B cell (primary cell): ENCODE measurements at regions of chr3 and their contacts with region 1.

Region 1: DNA sequence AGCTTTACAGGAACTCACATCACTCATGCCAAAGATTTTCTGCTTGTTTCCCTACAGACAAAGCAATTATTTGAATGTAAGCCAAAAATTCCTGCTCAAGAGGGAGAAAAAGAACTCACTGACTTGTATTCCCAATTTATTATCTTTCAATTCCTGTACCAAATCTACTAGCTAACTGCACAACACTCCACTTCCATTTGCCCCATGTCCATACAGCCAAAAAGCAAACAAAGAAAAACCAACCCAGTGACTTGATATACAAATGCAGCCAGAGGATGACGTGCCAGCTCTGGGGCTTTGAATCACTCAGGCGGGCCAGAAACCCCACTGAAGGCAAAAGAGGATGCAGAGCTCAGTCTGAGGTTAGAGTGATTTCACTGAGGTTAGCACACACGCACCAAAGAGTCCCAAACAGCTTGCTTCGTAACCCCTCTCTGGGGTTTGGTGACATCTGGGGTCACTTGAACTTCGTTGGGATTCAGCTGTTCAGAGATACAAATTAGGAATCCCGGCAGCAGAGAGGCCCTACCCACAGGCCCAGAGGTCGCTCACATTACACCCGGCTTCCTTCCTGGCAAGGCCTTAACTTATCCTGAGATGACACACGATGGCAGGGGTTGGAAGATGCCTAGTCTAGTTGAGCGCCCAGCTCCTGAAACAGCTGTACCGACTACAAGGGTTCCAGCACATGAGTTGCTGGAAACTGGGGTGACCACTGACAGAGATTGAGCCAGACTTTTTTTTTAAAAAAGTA is 1.6 kb downstream of the RFTN1 start:
- DNase-seq: peak; percentile 95
- ATAC-seq: peak; percentile 66
- H3K4me3 ChIP-seq: peak overlapping the region in 4 of 5 experiments; percentile 82 to 98 (median 91)
- H3K4me3 Mint-ChIP-seq: peak overlapping the region; percentile 74
- H3K27ac ChIP-seq: peak overlapping the region; percentile 89 to 97
- H3K27ac Mint-ChIP-seq: peak overlapping the region; percentile 71
- H3K4me1 ChIP-seq: peaks cover 80 to 87% of the 10 kb centered on the region in 2 donors
- H3K4me1 Mint-ChIP-seq: peaks cover 82% of the 10 kb centered on the region
- H3K27me3 ChIP-seq: no peaks in the 10 kb centered on the region
- H3K27me3 Mint-ChIP-seq: no peaks in the 10 kb centered on the region
- CTCF ChIP-seq: no peak

Region 2: DNA sequence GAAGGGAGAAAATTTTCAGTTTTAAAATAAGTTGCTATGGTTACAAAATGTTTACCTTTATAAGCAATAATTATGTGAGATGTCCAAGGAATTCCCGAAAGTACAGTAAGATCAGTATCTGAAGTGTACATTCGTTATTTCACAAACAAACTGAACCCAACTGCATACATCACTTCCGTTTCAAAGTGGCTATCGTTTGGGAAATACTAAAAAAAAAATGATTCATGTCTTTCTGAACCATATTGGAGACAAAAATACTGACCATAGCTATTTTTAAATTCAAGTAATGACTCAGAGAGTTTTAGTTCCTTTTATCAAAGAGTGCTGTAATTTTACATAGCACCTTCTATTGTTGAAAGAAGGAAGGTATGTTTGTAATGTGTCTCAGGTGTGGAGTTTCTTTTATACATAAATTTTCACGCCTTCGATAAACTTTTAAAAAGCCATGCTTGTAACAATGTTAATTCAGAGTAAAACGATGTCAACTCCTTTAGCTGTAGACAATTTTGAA is 706.0 kb before region 1 on chr3:
- CTCF ChIA-PET with region 1: no interaction called
- POLR2A ChIA-PET with region 1: no interaction called
- intact Hi-C with region 1: no loop called
- DNase-seq: peak; percentile 61
- ATAC-seq: peak; percentile 71
- H3K4me3 ChIP-seq: no peak overlapping the region
- H3K4me3 Mint-ChIP-seq: no peak overlapping the region
- H3K27ac ChIP-seq: peak overlapping the region; percentile 27 to 37
- H3K27ac Mint-ChIP-seq: peak overlapping the region; percentile 43
- H3K4me1 ChIP-seq: peaks cover 7 to 16% of the 10 kb centered on the region in 2 donors
- H3K4me1 Mint-ChIP-seq: peaks cover 46% of the 10 kb centered on the region
- H3K27me3 ChIP-seq: no peaks in the 10 kb centered on the region
- H3K27me3 Mint-ChIP-seq: no peaks in the 10 kb centered on the region
- CTCF ChIP-seq: no peak

Region 3: GRCh38 chr3:16264708-16265454 is 247.0 kb before region 1 on chr3 and contains the starts of genes DPH3 and OXNAD1:
- CTCF ChIA-PET with region 1: no interaction called
- POLR2A ChIA-PET with region 1: interaction called, 6 read pairs
- intact Hi-C with region 1: loop called (anchors 2 kb)
- DNase-seq: peak; percentile 99
- ATAC-seq: peak; percentile 96
- H3K4me3 ChIP-seq: peak within 1 kb of the TSS; percentile 80 to 97 (median 90)
- H3K4me3 Mint-ChIP-seq: peak within 1 kb of the TSS; percentile 99
- H3K27ac ChIP-seq: peak within 1 kb of the TSS; percentile 85 to 97
- H3K27ac Mint-ChIP-seq: peak within 1 kb of the TSS; percentile 99
- H3K4me1 ChIP-seq: peaks cover 12 to 13% of the 10 kb centered on the region in 2 donors
- H3K4me1 Mint-ChIP-seq: peaks cover 25% of the 10 kb centered on the region
- H3K27me3 ChIP-seq: no peaks in the 10 kb centered on the region
- H3K27me3 Mint-ChIP-seq: no peaks in the 10 kb centered on the region
- CTCF ChIP-seq: no peak
- total RNA-seq, gene DPH3: 11.5 and 12.9 TPM in 2 replicates
- total RNA-seq, gene OXNAD1: 11.2 and 12.3 TPM in 2 replicates

Region 4: DNA sequence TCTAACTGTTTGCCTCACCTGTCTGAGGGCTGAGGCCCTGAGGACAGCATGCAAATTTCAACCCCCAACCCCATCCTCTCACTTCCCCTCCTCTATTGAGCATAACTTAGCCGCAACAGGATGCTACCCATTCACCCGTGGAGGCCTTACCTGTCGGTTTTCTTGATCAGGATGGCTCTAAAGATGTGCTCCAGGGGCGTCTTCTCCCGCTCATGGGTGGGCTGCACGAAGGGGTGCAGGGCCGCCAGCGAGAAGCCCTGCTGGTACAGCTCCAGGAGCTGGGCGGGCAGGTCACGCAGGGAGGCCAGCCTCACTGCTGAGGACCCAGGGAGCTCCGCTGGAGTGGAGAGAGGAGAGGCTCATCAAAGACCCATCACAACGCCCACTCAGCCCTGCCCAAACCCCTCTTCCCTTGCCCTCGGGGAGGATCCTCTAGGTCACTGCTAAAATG is 78.1 kb before region 1 on chr3:
- CTCF ChIA-PET with region 1: interaction called, 3 read pairs
- POLR2A ChIA-PET with region 1: interaction called, 10 read pairs
- intact Hi-C with region 1: loop called (anchors 1 kb)
- DNase-seq: peak; percentile 84
- ATAC-seq: peak; percentile 70
- H3K4me3 ChIP-seq: no peak overlapping the region
- H3K4me3 Mint-ChIP-seq: peak overlapping the region; percentile 84
- H3K27ac ChIP-seq: peak overlapping the region in 1 of 2 donors; percentile 3
- H3K27ac Mint-ChIP-seq: peak overlapping the region; percentile 85
- H3K4me1 ChIP-seq: peaks cover 45 to 51% of the 10 kb centered on the region in 2 donors
- H3K4me1 Mint-ChIP-seq: peaks cover 56% of the 10 kb centered on the region
- H3K27me3 ChIP-seq: peaks cover 0 to 5% (median 0%) of the 10 kb centered on the region in 4 experiments
- H3K27me3 Mint-ChIP-seq: peaks cover 6% of the 10 kb centered on the region
- CTCF ChIP-seq: no peak

Region 5: DNA sequence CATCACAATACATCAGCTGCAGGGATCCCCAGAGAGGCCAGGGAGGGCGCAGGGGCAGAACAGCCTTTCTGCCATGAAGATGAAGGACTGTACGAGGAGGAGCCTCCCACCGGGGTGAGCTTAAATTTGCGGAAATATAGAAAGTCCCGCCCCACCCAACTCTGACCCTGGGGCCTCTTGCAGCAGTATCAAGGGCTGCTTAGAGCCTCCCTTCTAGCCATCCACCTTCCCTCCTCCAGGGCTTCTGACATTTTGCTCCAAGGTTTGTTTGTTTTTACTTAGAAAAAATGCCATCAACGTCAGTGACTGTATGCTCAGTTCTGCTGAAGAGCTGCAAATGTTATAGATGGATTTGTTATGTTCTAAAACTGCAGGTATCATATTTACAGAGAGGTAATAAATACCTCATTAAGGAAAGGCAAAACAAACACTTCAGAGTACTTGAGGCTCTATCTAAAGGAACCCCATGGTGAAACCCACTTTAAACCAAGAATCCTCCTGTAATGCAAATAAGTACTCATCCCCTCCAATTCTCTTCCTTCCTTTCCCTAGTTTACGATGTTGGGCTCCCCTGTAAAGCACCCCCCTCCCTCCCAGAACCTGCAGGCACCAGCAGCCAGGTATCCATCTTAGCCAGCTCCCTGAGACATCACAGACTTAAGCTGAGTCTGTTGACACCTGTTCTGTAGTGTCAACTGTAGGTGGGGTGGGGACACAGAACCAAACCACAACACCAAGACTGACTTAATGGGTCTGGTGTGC is 28.9 kb before region 1 on chr3:
- CTCF ChIA-PET with region 1: interaction called, 11 read pairs
- POLR2A ChIA-PET with region 1: interaction called, 9 read pairs
- intact Hi-C with region 1: loop called (anchors 1 kb)
- DNase-seq: peak; percentile 82
- ATAC-seq: peak; percentile 93
- H3K4me3 ChIP-seq: peak overlapping the region in 4 of 5 experiments; percentile 18 to 38 (median 31)
- H3K4me3 Mint-ChIP-seq: peak overlapping the region; percentile 65
- H3K27ac ChIP-seq: peak overlapping the region; percentile 64 to 74
- H3K27ac Mint-ChIP-seq: peak overlapping the region; percentile 74
- H3K4me1 ChIP-seq: peaks cover 63 to 75% of the 10 kb centered on the region in 2 donors
- H3K4me1 Mint-ChIP-seq: peaks cover 79% of the 10 kb centered on the region
- H3K27me3 ChIP-seq: no peaks in the 10 kb centered on the region
- H3K27me3 Mint-ChIP-seq: no peaks in the 10 kb centered on the region
- CTCF ChIP-seq: no peak

Region 6: DNA sequence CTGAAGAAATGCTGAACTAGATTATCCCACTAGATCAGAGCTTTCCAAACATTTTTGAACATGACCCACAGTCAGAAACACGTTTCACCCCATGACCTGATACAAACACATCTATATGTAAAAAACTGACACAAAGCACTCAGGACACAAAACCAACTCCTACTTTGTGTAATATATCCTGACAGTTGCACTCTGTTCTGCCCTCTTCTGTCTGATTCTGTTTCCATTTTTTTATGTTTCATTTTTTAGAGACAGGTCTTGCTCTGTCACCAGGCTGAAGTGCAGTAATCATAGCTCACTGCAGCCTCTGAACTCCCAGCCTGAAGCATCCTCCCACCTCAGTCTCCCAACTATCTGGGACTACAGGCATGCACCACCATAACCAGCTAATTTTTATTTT is 17.4 kb after region 1 on chr3:
- CTCF ChIA-PET with region 1: interaction called, 13 read pairs
- POLR2A ChIA-PET with region 1: no interaction called
- intact Hi-C with region 1: loop called (anchors 2 kb)
- DNase-seq: peak; percentile 52
- ATAC-seq: no peak
- H3K4me3 ChIP-seq: no peak overlapping the region
- H3K4me3 Mint-ChIP-seq: no peak overlapping the region
- H3K27ac ChIP-seq: no peak overlapping the region
- H3K27ac Mint-ChIP-seq: no peak overlapping the region
- H3K4me1 ChIP-seq: peaks cover 14 to 19% of the 10 kb centered on the region in 2 donors
- H3K4me1 Mint-ChIP-seq: peaks cover 15% of the 10 kb centered on the region
- H3K27me3 ChIP-seq: no peaks in the 10 kb centered on the region
- H3K27me3 Mint-ChIP-seq: no peaks in the 10 kb centered on the region
- CTCF ChIP-seq: peak; percentile 47

Region 7: DNA sequence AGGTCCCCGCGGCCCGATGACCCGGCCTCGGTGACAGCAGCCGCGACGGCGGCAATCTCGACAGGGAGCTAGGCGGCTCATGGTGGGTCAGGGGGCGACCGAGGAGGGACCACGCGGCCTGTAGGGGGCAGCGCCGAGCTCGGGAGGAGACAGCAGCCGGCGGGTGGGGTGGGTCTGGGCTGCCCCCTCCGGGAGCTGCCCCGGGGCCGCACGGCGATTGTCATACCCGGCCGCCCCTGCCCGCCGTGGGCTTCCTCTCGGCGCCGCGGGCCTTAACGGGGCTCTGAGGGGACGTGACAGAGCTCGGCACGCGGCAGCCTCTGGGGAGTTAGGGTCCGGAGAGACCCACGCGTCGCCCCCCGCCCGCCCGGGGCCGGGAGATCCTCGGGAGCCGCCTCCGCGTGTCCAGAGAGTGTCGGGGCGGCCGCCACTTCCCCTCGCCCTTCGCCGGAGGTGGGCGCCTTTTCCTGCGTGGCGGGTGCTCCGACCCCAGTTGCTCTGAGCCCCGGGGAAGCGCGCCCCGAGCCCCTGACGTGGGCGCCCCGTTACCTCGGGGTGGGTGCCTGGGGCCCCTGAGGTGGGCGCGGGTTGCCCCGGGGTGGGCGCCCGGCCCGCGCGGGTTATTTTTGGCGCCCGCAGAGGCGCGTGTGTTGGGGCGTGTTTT is 372.4 kb after region 1 on chr3:
- CTCF ChIA-PET with region 1: no interaction called
- POLR2A ChIA-PET with region 1: no interaction called
- intact Hi-C with region 1: loop called (anchors 5 kb)
- DNase-seq: peak; percentile 84
- ATAC-seq: peak; percentile 60
- H3K4me3 ChIP-seq: peak overlapping the region in 4 of 5 experiments; percentile 77 to 98 (median 96)
- H3K4me3 Mint-ChIP-seq: peak overlapping the region; percentile 97
- H3K27ac ChIP-seq: peak overlapping the region; percentile 82 to 90
- H3K27ac Mint-ChIP-seq: peak overlapping the region; percentile 95
- H3K4me1 ChIP-seq: peaks cover 17 to 23% of the 10 kb centered on the region in 2 donors
- H3K4me1 Mint-ChIP-seq: peaks cover 40% of the 10 kb centered on the region
- H3K27me3 ChIP-seq: no peaks in the 10 kb centered on the region
- H3K27me3 Mint-ChIP-seq: no peaks in the 10 kb centered on the region
- CTCF ChIP-seq: peak; percentile 71